CD4-positive, alpha-beta T cell (primary cell): ENCODE measurements at regions of chr4 and their contacts with region 1.

Region 1: GRCh38 chr4:1346781-1347409 is at the start of gene UVSSA:
- DNase-seq: peak; percentile 100
- ATAC-seq: peak; percentile 87
- H3K4me3 ChIP-seq: peak within 1 kb of the TSS; percentile 77
- H3K4me3 Mint-ChIP-seq: peak within 1 kb of the TSS; percentile 96
- H3K27ac ChIP-seq: peak within 1 kb of the TSS; percentile 84 to 89
- H3K27ac Mint-ChIP-seq: peak within 1 kb of the TSS; percentile 96
- H3K4me1 ChIP-seq: peaks cover 40% of the 10 kb centered on the region
- H3K4me1 Mint-ChIP-seq: peaks cover 60% of the 10 kb centered on the region
- H3K27me3 ChIP-seq: no peaks in the 10 kb centered on the region
- H3K27me3 Mint-ChIP-seq: no peaks in the 10 kb centered on the region
- CTCF ChIP-seq: no peak
- total RNA-seq, gene UVSSA: 31.1 to 33.1 TPM

Region 2: DNA sequence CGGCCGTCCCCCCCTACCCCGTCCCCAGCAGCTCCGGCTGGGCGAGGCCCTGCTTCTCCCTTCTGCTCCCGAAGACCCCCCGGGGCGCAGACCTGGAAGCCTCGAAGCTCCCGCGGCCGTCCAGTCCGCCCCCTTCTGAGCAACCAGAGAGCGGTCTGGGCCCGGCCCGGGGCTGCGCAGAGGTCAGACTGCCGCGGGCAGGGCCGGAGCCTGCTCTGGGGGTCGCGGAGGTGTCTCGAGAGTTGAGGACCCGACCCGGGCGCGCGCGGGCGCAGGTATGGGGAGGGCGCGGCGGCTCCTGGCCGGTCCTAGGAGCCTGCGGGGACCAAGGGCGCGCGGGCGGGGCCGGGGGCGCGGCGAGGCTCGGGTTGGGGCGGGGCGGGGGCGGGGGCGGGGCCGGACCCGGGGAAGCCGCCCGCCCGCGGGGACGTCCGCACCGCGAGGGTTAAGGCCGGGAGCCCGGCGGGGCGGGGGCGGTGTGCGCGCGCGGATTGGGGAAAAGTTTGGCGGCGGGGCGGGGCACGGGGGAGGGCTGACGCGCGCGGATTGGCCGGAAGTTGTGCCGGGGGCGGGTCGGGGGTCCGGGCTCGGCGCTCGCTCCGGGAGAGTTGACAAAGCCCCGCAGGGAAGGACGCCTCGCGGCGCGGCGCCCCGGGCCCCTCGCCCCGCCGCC is 335.7 kb before region 1 on chr4 and contains the start of gene FGFRL1:
- CTCF ChIA-PET with region 1: no interaction called
- POLR2A ChIA-PET with region 1: interaction called, 3 read pairs
- intact Hi-C with region 1: loop called (anchors 5 kb)
- DNase-seq: peak; percentile 84 to 97 (median 93)
- ATAC-seq: peak; percentile 58
- H3K4me3 ChIP-seq: peak within 1 kb of the TSS; percentile 66
- H3K4me3 Mint-ChIP-seq: peak within 1 kb of the TSS; percentile 91
- H3K27ac ChIP-seq: peak within 1 kb of the TSS; percentile 60 to 62
- H3K27ac Mint-ChIP-seq: peak within 1 kb of the TSS; percentile 97
- H3K4me1 ChIP-seq: peaks cover 31% of the 10 kb centered on the region
- H3K4me1 Mint-ChIP-seq: peaks cover 14% of the 10 kb centered on the region
- H3K27me3 ChIP-seq: peaks cover 13 to 19% of the 10 kb centered on the region in 2 experiments
- H3K27me3 Mint-ChIP-seq: peaks cover 37% of the 10 kb centered on the region
- CTCF ChIP-seq: no peak
- total RNA-seq, gene FGFRL1: 21.8 to 25.0 TPM

Region 3: GRCh38 chr4:1116838-1117237 is 230.1 kb before region 1 on chr4:
- CTCF ChIA-PET with region 1: no interaction called
- POLR2A ChIA-PET with region 1: no interaction called
- intact Hi-C with region 1: no loop called
- DNase-seq: no peak
- ATAC-seq: no peak
- H3K4me3 ChIP-seq: no peak overlapping the region
- H3K4me3 Mint-ChIP-seq: no peak overlapping the region
- H3K27ac ChIP-seq: no peak overlapping the region
- H3K27ac Mint-ChIP-seq: no peak overlapping the region
- H3K4me1 ChIP-seq: peaks cover 3% of the 10 kb centered on the region
- H3K4me1 Mint-ChIP-seq: no peaks in the 10 kb centered on the region
- H3K27me3 ChIP-seq: peaks cover 0 to 12% of the 10 kb centered on the region in 2 experiments
- H3K27me3 Mint-ChIP-seq: peaks cover 23% of the 10 kb centered on the region
- CTCF ChIP-seq: no peak

Region 4: DNA sequence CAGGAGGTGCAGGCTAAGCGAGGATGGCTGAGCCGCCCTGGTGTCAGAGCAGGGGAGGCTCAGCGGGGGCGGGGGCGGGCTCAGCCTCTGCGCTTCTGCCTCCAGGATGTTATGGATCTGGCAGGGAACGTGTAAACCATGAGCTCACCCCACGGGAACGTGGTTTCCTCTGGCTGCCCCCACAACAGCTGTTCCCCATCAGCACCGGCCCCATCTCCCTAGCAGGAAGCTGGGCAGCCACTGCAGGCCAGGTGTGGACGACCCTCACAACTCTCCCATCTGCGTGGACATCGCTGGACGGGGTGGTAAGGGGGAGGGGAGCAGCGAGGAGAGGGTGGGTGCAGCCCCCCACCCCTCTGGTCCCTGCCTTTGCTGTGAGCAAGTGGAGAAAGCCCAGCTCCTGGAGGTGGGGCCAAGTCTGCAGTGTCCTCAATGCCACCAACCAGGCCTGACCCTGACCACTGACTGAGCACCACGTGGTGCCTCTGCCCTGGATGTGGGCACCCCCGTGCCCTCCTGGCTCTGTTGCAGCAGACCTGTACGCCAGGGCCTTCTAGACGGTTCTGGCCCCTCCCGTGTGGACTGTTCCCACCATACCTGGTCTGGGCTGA is 146.4 kb before region 1 on chr4:
- CTCF ChIA-PET with region 1: no interaction called
- POLR2A ChIA-PET with region 1: interaction called, 7 read pairs
- intact Hi-C with region 1: loop called in 1 of 2 experiments (anchors 1 kb)
- DNase-seq: peak in 4 of 14 experiments; percentile 32 to 58 (median 37)
- ATAC-seq: no peak
- H3K4me3 ChIP-seq: peak overlapping the region; percentile 66
- H3K4me3 Mint-ChIP-seq: peak overlapping the region; percentile 83
- H3K27ac ChIP-seq: peak overlapping the region; percentile 71 to 80
- H3K27ac Mint-ChIP-seq: peak overlapping the region; percentile 97
- H3K4me1 ChIP-seq: peaks cover 65% of the 10 kb centered on the region
- H3K4me1 Mint-ChIP-seq: peaks cover 30% of the 10 kb centered on the region
- H3K27me3 ChIP-seq: no peaks in the 10 kb centered on the region
- H3K27me3 Mint-ChIP-seq: no peaks in the 10 kb centered on the region
- CTCF ChIP-seq: no peak

Region 5: DNA sequence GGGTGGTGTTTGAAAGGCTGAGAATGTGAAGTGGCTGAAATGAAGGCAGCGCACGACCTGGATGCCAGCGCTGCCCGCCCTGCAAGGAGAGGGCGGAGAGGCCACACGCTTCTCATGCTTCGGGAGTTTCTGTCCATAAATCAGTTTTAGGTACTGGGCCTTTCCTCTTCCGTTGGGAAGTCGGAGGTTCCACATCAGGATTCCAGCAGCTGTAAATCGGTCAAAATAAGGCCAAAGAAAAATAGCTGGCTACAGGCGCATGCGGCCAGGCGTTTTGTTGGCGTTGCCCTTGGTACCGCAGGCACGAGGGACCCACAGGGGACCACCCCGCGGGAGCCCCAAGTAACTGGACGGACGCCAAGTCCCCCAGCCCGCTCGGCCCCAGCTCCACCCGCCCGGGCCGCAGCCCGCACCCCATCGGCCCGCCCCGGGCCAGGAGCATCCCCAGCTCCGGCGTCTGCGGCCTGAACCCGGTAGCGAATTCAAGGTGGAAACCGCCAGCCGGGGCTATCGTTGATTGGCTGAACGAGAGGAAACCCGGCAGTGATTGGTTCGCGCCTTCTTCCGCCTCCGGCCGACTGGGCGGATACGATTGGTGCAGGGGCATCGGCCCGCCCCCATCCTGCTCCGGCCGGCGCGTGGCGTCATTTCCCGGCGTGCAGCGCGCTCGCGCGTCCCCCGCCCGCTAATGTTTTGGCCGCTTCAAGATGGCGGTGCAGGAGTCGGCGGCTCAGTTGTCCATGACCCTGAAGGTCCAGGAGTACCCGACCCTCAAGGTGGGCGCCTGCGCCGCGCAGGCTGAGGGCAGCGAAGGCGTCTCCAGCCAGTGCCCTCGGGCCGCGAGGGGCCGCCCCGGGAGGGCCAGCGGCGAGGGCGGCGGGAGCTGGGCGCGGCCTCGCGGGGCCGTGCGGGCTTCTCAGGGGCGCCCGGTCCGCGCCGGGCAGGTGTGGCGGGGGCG is 57.4 kb before region 1 on chr4 and contains the start of gene MAEA:
- CTCF ChIA-PET with region 1: interaction called, 17 read pairs
- POLR2A ChIA-PET with region 1: interaction called, 49 read pairs
- intact Hi-C with region 1: loop called (anchors 1 kb)
- DNase-seq: peak; percentile 94 to 98 (median 96)
- ATAC-seq: peak; percentile 99
- H3K4me3 ChIP-seq: peak within 1 kb of the TSS; percentile 73
- H3K4me3 Mint-ChIP-seq: peak within 1 kb of the TSS; percentile 93
- H3K27ac ChIP-seq: peak within 1 kb of the TSS; percentile 60 to 83
- H3K27ac Mint-ChIP-seq: peak within 1 kb of the TSS; percentile 93
- H3K4me1 ChIP-seq: peaks cover 46% of the 10 kb centered on the region
- H3K4me1 Mint-ChIP-seq: peaks cover 45% of the 10 kb centered on the region
- H3K27me3 ChIP-seq: no peaks in the 10 kb centered on the region
- H3K27me3 Mint-ChIP-seq: no peaks in the 10 kb centered on the region
- CTCF ChIP-seq: no peak
- total RNA-seq, gene MAEA: 61.5 to 63.2 TPM

Region 6: GRCh38 chr4:1448602-1449420 is 101.9 kb after region 1 on chr4:
- CTCF ChIA-PET with region 1: no interaction called
- POLR2A ChIA-PET with region 1: no interaction called
- intact Hi-C with region 1: no loop called
- DNase-seq: peak in 1 of 14 experiments; percentile 6
- ATAC-seq: no peak
- H3K4me3 ChIP-seq: no peak overlapping the region
- H3K4me3 Mint-ChIP-seq: no peak overlapping the region
- H3K27ac ChIP-seq: no peak overlapping the region
- H3K27ac Mint-ChIP-seq: no peak overlapping the region
- H3K4me1 ChIP-seq: no peaks in the 10 kb centered on the region
- H3K4me1 Mint-ChIP-seq: no peaks in the 10 kb centered on the region
- H3K27me3 ChIP-seq: peaks cover 0 to 12% of the 10 kb centered on the region in 2 experiments
- H3K27me3 Mint-ChIP-seq: peaks cover 22% of the 10 kb centered on the region
- CTCF ChIP-seq: no peak

Region 7: GRCh38 chr4:1579901-1580691 is 233.2 kb after region 1 on chr4:
- CTCF ChIA-PET with region 1: no interaction called
- POLR2A ChIA-PET with region 1: interaction called, 8 read pairs
- intact Hi-C with region 1: loop called in 1 of 2 experiments (anchors 2 kb)
- DNase-seq: peak; percentile 88 to 97 (median 93)
- ATAC-seq: peak; percentile 82
- H3K4me3 ChIP-seq: peak overlapping the region; percentile 73
- H3K4me3 Mint-ChIP-seq: peak overlapping the region; percentile 86
- H3K27ac ChIP-seq: peak overlapping the region in 1 of 2 donors; percentile 65
- H3K27ac Mint-ChIP-seq: peak overlapping the region; percentile 63
- H3K4me1 ChIP-seq: peaks cover 14% of the 10 kb centered on the region
- H3K4me1 Mint-ChIP-seq: no peaks in the 10 kb centered on the region
- H3K27me3 ChIP-seq: no peaks in the 10 kb centered on the region
- H3K27me3 Mint-ChIP-seq: no peaks in the 10 kb centered on the region
- CTCF ChIP-seq: no peak

Region 8: GRCh38 chr4:1721004-1721665 is 374.2 kb after region 1 on chr4 and contains the starts of genes TACC3 and TMEM129:
- CTCF ChIA-PET with region 1: no interaction called
- POLR2A ChIA-PET with region 1: interaction called, 12 read pairs
- intact Hi-C with region 1: loop called in 1 of 2 experiments (anchors 5 kb)
- DNase-seq: peak; percentile 90 to 99 (median 95)
- ATAC-seq: peak; percentile 80
- H3K4me3 ChIP-seq: peak within 1 kb of the TSS; percentile 53
- H3K4me3 Mint-ChIP-seq: peak within 1 kb of the TSS; percentile 92
- H3K27ac ChIP-seq: peak within 1 kb of the TSS; percentile 85 to 88
- H3K27ac Mint-ChIP-seq: peak within 1 kb of the TSS; percentile 99
- H3K4me1 ChIP-seq: peaks cover 77% of the 10 kb centered on the region
- H3K4me1 Mint-ChIP-seq: peaks cover 56% of the 10 kb centered on the region
- H3K27me3 ChIP-seq: no peaks in the 10 kb centered on the region
- H3K27me3 Mint-ChIP-seq: no peaks in the 10 kb centered on the region
- CTCF ChIP-seq: no peak
- total RNA-seq, gene TACC3: 123 TPM
- total RNA-seq, gene TMEM129: 17.2 to 17.6 TPM